Ovary (tissue), 10 donors: ENCODE measurements at regions of chr18 and their contacts with region 1.

Region 1: DNA sequence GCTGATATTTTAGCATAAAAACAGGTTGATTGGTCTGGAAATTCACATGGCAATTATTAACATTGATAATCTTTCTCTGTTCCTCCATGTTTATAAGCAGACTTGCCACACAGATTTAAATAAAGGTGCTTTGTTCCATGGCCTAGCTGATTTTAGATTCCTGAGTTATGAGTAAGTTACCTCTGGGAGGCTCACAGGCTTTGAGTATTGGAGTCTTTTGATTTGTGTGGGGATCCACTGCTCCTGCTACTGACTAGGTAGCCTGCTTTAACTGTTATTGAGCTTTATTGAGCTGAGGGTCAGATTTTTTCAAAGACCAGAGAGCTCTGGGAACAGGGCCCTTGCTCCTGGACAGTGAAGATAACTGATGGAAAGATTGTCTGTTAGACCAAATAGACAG is 166.2 kb downstream of the ANKRD30B start:
- DNase-seq: no peak
- H3K4me3 ChIP-seq: no peak overlapping the region
- H3K27ac ChIP-seq: no peak overlapping the region
- H3K4me1 ChIP-seq: no peaks in the 10 kb centered on the region
- H3K27me3 ChIP-seq: no peaks in the 10 kb centered on the region
- CTCF ChIP-seq: no peak
- EP300 ChIP-seq: no peak
- POLR2A ChIP-seq: no peak

Region 2: GRCh38 chr18:14969500-14969899 is 55.4 kb after region 1 on chr18:
- intact Hi-C with region 1: loop called in 1 of 4 experiments (anchors 10 kb)
- DNase-seq: no peak
- H3K4me3 ChIP-seq: no peak overlapping the region
- H3K27ac ChIP-seq: no peak overlapping the region
- H3K4me1 ChIP-seq: no peaks in the 10 kb centered on the region
- H3K27me3 ChIP-seq: no peaks in the 10 kb centered on the region
- CTCF ChIP-seq: no peak
- EP300 ChIP-seq: no peak
- POLR2A ChIP-seq: no peak